ENCODE measurements at regions of chr11 and their contacts with region 1.

Region 1: DNA sequence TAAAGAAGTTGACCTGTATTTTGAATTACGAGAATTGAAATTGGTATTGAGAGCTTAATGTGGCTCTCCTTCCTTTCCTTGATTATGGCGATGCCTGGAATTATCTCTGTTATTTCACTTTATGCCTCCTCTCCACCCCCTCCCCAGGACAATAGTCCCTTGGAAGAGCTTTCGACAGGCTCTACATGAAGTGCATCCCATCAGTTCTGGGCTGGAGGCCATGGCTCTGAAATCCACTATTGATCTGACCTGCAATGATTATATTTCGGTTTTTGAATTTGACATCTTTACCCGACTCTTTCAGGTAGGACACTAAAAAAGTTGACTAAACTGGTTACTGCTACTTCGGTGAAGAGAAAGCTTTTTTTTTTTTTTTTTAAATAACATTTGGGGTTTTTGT is 43.2 kb downstream of the MCAM start:
- DNase-seq: no peak
- ATAC-seq: no peak
- H3K4me3 Mint-ChIP-seq: no peak overlapping the region
- H3K27ac Mint-ChIP-seq: no peak overlapping the region
- H3K4me1 Mint-ChIP-seq: no peaks in the 10 kb centered on the region
- H3K27me3 Mint-ChIP-seq: no peaks in the 10 kb centered on the region

Region 2: DNA sequence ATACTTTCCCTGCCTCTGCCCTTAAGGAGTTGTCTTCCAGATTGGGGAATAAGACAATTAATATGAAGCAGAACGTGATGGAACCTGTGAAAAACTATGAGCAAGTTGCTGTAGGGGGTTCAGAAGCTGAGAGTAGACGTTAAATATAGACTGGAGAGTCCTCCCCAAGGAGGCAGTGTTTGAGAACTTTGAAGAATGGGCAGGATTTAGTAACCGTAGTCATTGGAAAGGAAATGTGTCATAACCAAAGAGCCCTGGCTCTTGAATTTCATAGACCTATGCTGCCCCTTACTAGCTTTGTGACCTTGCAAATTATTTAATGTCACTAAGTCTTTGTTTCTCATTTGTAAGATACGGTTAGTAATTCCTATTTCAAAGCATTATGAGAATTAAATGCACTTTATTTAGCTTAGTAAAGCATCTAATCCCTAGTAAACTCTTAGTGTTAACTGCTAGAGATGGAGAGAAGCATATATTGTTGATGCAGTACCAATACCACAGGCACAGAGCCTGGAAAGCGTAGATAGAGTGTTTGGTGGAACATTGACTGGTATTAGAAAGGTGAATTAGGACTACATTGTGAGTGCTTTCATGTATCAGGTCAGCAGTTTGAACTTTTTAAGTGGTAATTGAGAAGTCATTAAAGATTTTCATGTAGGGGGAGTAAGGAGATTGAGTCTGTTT is 10.9 kb before region 1 on chr11:
- CTCF ChIA-PET with region 1: interaction called, 34 read pairs
- POLR2A ChIA-PET with region 1: interaction called, 4 read pairs
- DNase-seq: peak; percentile 47
- ATAC-seq: peak; percentile 63
- H3K4me3 Mint-ChIP-seq: no peak overlapping the region
- H3K27ac Mint-ChIP-seq: no peak overlapping the region
- H3K4me1 Mint-ChIP-seq: peaks cover 50% of the 10 kb centered on the region
- H3K27me3 Mint-ChIP-seq: no peaks in the 10 kb centered on the region